Calu3 (cell line): ENCODE measurements at regions of chr20 and their contacts with region 1.

Region 1: GRCh38 chr20:19205977-19206396 is 6.5 kb upstream of the SLC24A3 start:
- DNase-seq: peak; percentile 62
- H3K4me3 Mint-ChIP-seq: no peak overlapping the region
- H3K27ac Mint-ChIP-seq: no peak overlapping the region
- H3K4me1 Mint-ChIP-seq: no peaks in the 10 kb centered on the region
- H3K27me3 Mint-ChIP-seq: peaks cover 11% of the 10 kb centered on the region
- CTCF ChIP-seq: peak; percentile 28

Region 2: DNA sequence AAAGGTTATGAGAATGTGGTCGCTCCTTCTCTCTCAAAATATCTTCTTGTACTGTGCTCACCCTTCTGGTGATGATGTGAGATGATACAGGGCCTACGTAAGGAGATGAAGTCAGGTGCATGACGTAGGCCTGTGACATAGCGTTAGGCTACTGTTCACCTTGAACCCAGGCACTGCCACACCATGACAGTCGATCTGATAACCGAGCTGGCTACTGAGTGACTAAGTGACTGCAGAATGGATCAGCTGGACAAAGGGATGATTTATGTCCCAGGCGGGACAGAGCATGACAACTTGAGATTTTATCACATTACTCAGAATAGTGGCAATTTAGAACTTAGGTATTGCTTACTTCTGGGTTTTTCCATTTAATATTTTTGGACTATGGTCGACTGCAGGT is 17.7 kb after region 1 on chr20:
- CTCF ChIA-PET with region 1: no interaction called
- intact Hi-C with region 1: no loop called
- DNase-seq: no peak
- H3K4me3 Mint-ChIP-seq: no peak overlapping the region
- H3K27ac Mint-ChIP-seq: no peak overlapping the region
- H3K4me1 Mint-ChIP-seq: no peaks in the 10 kb centered on the region
- H3K27me3 Mint-ChIP-seq: peaks cover 29% of the 10 kb centered on the region
- CTCF ChIP-seq: no peak

Region 3: GRCh38 chr20:19661717-19662636 is 456.0 kb after region 1 on chr20:
- CTCF ChIA-PET with region 1: no interaction called
- intact Hi-C with region 1: loop called (anchors 2 kb)
- DNase-seq: peak; percentile 26
- H3K4me3 Mint-ChIP-seq: no peak overlapping the region
- H3K27ac Mint-ChIP-seq: no peak overlapping the region
- H3K4me1 Mint-ChIP-seq: no peaks in the 10 kb centered on the region
- H3K27me3 Mint-ChIP-seq: peaks cover 14% of the 10 kb centered on the region
- CTCF ChIP-seq: peak; percentile 50